Tibial artery (tissue), 4 donors: ENCODE measurements at regions of chr17 and their contacts with region 1.

Region 1: GRCh38 chr17:17919169-17920107 is 52.8 kb downstream of the TOM1L2 start:
- DNase-seq: peak; percentile 69 to 82
- H3K4me3 ChIP-seq: no peak overlapping the region
- H3K27ac ChIP-seq: no peak overlapping the region
- H3K4me1 ChIP-seq: peaks cover 0 to 41% (median 29%) of the 10 kb centered on the region in 4 donors
- H3K27me3 ChIP-seq: no peaks in the 10 kb centered on the region
- CTCF ChIP-seq: peak; percentile 74 to 76

Region 2: GRCh38 chr17:17823433-17824118 is 95.9 kb before region 1 on chr17:
- intact Hi-C with region 1: no loop called
- DNase-seq: peak; percentile 84 to 96
- H3K4me3 ChIP-seq: peak overlapping the region; percentile 64
- H3K27ac ChIP-seq: peak overlapping the region; percentile 78 to 92
- H3K4me1 ChIP-seq: peaks cover 5 to 87% (median 53%) of the 10 kb centered on the region in 4 donors
- H3K27me3 ChIP-seq: no peaks in the 10 kb centered on the region
- CTCF ChIP-seq: no peak

Region 3: DNA sequence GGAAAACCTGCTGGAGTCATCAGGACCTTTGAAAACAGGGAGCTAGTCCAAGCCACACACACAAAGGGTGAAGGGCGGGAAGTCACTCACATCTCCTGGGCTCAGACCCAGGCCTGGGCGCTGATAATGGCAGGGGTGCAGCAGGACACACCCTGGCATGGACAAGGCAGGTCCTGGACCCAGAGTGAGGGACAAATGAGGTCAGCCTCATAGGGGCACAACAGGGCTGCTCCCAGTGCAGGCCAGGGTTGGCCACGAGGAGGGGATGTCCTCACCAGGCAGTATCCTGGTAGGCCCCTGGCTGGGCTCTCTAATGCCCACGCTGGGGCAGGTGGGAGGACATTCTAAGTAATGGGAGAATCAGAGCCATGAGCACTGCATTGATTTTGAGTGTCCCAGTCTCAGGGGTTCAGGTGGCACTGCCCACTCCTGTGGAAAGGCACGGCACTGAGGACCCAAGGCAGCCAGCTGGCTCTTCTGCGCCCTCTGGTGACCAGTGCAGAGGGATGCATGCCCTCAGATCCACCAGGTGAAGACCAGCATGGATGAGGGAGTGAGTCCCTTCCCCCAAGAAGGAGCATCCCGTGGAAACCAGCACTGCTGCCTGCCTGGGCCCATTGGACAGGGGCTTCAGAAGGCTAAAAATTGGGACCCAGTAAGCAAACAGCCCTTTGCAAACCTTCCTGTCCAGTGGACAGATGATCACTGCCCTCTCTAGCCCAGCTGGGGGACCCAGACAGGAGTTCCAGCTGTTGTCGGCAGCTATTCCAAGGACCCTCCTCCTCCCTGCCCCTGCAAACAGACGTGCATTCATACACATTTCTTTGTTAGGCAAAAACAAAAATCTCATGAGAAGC is 59.3 kb before region 1 on chr17:
- intact Hi-C with region 1: loop called (anchors 5 kb)
- DNase-seq: peak; percentile 45 to 83
- H3K4me3 ChIP-seq: no peak overlapping the region
- H3K27ac ChIP-seq: no peak overlapping the region
- H3K4me1 ChIP-seq: peaks cover 0 to 27% (median 25%) of the 10 kb centered on the region in 4 donors
- H3K27me3 ChIP-seq: no peaks in the 10 kb centered on the region
- CTCF ChIP-seq: peak; percentile 98 to 99